Activated B cell treated with CpG ODN at 0.5 μM for 24 hours (primary cell): ENCODE measurements at regions of chr16 and their contacts with region 1.

Region 1: DNA sequence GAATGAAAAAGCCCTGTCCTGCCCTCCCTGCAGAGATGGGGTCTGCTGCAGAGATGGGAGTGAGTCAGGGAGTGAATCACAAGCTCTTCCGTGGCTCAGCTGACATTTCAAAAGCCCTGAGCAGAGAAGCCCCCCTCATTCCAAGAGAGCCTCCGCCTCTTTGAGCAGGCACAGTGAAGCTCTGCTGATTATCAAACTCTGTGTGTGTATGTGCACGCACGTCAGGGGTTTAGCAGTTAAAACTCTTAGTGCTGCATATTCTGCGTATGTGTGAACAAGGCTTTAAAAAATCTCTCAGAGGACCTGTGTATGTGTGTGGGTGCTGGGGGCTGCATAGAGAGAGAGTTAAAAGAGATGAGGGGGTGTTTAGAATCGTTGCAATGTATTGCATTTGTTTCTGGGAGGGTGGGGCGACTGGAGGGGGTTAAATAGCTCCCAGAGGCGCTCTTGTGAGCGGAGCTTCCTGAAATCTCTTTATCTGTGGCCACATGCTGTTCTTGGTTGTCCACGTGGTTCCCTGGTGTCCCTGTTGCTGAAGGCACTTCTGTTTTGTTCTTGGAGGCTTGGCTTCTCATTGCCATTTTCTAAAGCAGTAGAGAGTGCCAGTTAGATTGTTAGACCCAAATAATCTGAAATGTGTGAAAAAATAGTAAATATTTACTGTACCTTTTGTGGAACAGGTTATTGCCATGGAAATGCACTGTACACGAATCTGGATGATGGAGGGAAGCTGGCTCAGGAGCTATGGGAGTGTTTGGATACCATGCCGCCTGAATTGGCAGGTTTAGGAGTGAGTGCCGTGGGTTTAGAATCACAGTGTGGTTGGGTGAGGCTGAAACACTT is 116.6 kb downstream of the PRKCB start:
- DNase-seq: no peak
- ATAC-seq: peak; percentile 38
- H3K4me3 Mint-ChIP-seq: peak overlapping the region; percentile 42
- H3K27ac Mint-ChIP-seq: peak overlapping the region; percentile 91
- H3K4me1 Mint-ChIP-seq: peaks cover 96% of the 10 kb centered on the region
- H3K27me3 Mint-ChIP-seq: no peaks in the 10 kb centered on the region
- CTCF ChIP-seq: no peak

Region 2: GRCh38 chr16:23924128-23924527 is 28.2 kb before region 1 on chr16:
- CTCF ChIA-PET with region 1: no interaction called
- POLR2A ChIA-PET with region 1: interaction called, 3 read pairs
- intact Hi-C with region 1: loop called (anchors 2 kb)
- DNase-seq: no peak
- ATAC-seq: peak; percentile 91
- H3K4me3 Mint-ChIP-seq: peak overlapping the region; percentile 42
- H3K27ac Mint-ChIP-seq: peak overlapping the region; percentile 94
- H3K4me1 Mint-ChIP-seq: peaks cover 82% of the 10 kb centered on the region
- H3K27me3 Mint-ChIP-seq: no peaks in the 10 kb centered on the region
- CTCF ChIP-seq: no peak

Region 3: DNA sequence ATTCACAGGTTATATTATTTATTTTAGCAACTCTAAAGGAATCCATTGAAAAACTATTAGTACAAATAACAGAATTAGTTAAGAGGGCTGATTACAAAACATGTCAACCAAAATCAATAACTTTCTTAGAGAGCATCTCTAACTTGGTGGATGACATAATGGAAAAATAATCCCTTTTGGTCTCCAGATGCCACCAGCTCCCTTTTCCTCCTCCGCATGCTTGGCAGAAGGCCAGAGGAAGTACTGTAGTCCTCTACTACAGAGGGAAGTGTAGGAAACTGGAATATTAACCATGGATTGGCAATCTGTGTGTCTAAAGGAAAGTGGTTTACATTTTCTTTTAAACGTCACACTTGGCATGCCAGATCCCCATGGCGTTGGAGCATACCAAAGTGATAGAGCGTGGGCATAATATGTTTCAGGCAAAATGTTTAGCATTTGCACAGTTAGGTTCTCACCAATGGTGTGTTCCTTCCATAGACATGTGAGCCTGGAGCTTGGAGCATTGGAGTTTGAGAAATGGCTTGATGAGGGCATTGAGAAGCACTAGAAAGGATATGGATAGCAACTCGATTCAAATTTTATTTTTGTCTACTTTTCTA is 10.3 kb before region 1 on chr16:
- CTCF ChIA-PET with region 1: interaction called, 4 read pairs
- POLR2A ChIA-PET with region 1: interaction called, 4 read pairs
- intact Hi-C with region 1: loop called (anchors 2 kb)
- DNase-seq: no peak
- ATAC-seq: no peak
- H3K4me3 Mint-ChIP-seq: no peak overlapping the region
- H3K27ac Mint-ChIP-seq: peak overlapping the region; percentile 80
- H3K4me1 Mint-ChIP-seq: peaks cover 84% of the 10 kb centered on the region
- H3K27me3 Mint-ChIP-seq: no peaks in the 10 kb centered on the region
- CTCF ChIP-seq: no peak

Region 4: DNA sequence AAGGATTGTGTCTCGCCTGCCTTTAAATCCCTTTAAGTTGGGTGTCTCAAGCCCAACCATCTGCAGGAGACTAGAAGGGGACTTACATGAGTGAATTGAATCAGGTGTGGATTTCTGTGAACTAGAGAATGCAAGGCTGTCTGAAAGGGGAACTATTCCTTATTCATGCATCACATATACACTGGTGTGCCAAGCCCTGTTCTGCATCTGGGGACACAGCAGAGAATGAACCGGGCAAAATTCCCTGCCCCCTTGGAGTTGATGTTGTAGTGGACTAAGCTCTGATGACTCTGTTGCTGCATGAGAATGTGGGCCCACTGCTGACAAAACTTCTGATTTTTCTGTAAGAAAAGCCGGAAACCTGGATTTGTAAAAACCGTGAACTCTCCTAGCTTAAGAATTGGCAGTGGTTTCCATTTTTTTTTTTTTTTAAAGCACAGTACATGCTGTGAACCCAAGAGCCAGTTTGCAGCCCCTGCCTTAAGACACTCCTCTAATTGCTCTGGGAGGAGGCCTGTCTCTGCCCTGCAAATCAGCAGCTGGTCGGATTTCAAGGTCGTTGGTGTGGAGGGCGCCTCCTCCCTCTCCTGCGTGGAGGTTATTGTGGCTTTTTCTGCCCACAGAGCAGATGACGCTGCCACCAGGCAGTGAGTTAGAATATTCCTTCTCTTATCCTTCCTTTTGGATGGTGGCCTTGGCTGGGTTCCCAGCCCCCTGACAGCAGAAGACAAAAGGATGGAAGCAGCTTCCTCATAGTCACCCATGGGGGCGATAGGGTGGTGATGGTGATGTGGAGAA is 14.4 kb after region 1 on chr16:
- CTCF ChIA-PET with region 1: interaction called, 4 read pairs
- POLR2A ChIA-PET with region 1: interaction called, 13 read pairs
- intact Hi-C with region 1: loop called (anchors 1 kb)
- DNase-seq: no peak
- ATAC-seq: peak; percentile 79
- H3K4me3 Mint-ChIP-seq: peak overlapping the region; percentile 59
- H3K27ac Mint-ChIP-seq: peak overlapping the region; percentile 67
- H3K4me1 Mint-ChIP-seq: peaks cover 87% of the 10 kb centered on the region
- H3K27me3 Mint-ChIP-seq: no peaks in the 10 kb centered on the region
- CTCF ChIP-seq: no peak

Region 5: GRCh38 chr16:23987443-23987842 is 35.1 kb after region 1 on chr16:
- CTCF ChIA-PET with region 1: no interaction called
- POLR2A ChIA-PET with region 1: no interaction called
- intact Hi-C with region 1: loop called (anchors 5 kb)
- DNase-seq: no peak
- ATAC-seq: peak; percentile 97
- H3K4me3 Mint-ChIP-seq: peak overlapping the region; percentile 46
- H3K27ac Mint-ChIP-seq: peak overlapping the region; percentile 78
- H3K4me1 Mint-ChIP-seq: peaks cover 52% of the 10 kb centered on the region
- H3K27me3 Mint-ChIP-seq: no peaks in the 10 kb centered on the region
- CTCF ChIP-seq: no peak